ENCODE measurements at regions of chr6 and their contacts with region 1.

Region 1: DNA sequence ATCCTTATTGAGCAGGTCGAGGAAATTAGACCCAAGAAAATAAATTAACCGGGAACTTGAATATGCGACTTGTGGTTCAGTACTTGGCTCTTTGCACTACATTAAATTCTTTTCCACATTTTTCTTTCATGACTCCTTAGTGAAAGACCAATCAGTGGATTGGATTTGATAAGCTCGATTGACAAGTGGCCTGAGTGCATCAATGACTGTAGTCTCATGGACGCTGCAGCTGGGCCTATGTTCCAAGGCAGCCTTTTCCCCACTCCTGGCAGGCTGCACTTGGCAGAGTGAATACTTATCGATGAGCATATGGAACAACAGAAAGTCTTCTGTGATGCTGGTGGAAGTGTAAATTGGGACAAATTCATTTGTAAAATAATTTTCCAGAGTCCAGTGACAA is 210.8 kb upstream of the EXOC2 start:
- DNase-seq: no peak
- H3K4me3 Mint-ChIP-seq: no peak overlapping the region
- H3K27ac Mint-ChIP-seq: no peak overlapping the region
- H3K4me1 Mint-ChIP-seq: no peaks in the 10 kb centered on the region
- H3K27me3 Mint-ChIP-seq: no peaks in the 10 kb centered on the region

Region 2: GRCh38 chr6:364609-365540 is 538.9 kb before region 1 on chr6:
- CTCF ChIA-PET with region 1: no interaction called
- intact Hi-C with region 1: no loop called
- DNase-seq: no peak
- H3K4me3 Mint-ChIP-seq: no peak overlapping the region
- H3K27ac Mint-ChIP-seq: no peak overlapping the region
- H3K4me1 Mint-ChIP-seq: no peaks in the 10 kb centered on the region
- H3K27me3 Mint-ChIP-seq: peaks cover 2% of the 10 kb centered on the region

Region 3: DNA sequence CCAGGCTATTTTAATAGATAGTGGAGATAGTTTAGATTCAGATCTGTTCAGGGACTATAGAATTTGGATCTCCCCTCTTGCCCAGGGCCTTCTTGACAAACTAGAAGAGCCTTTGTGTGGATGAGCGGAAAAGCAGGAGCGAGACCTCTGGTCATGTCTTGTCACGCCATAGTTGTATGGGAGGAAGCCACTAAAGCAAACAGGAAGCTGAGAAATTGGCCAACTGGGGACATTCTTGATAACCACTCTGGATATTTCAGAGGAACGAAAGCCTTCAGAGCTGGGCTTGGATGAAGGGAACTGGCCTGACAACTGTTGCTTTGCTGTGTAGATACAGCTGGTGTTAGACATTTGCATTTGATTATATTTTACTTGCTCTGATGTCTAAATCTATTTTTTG is 156.7 kb before region 1 on chr6:
- CTCF ChIA-PET with region 1: no interaction called
- intact Hi-C with region 1: loop called (anchors 10 kb)
- DNase-seq: no peak
- H3K4me3 Mint-ChIP-seq: no peak overlapping the region
- H3K27ac Mint-ChIP-seq: no peak overlapping the region
- H3K4me1 Mint-ChIP-seq: no peaks in the 10 kb centered on the region
- H3K27me3 Mint-ChIP-seq: no peaks in the 10 kb centered on the region

Region 4: GRCh38 chr6:887583-888235 is 16.1 kb before region 1 on chr6:
- CTCF ChIA-PET with region 1: no interaction called
- intact Hi-C with region 1: no loop called
- DNase-seq: no peak
- H3K4me3 Mint-ChIP-seq: no peak overlapping the region
- H3K27ac Mint-ChIP-seq: no peak overlapping the region
- H3K4me1 Mint-ChIP-seq: peaks cover 9% of the 10 kb centered on the region
- H3K27me3 Mint-ChIP-seq: peaks cover 2% of the 10 kb centered on the region

Region 5: GRCh38 chr6:1113921-1114420 is 210.2 kb after region 1 on chr6:
- CTCF ChIA-PET with region 1: no interaction called
- intact Hi-C with region 1: no loop called
- DNase-seq: no peak
- H3K4me3 Mint-ChIP-seq: no peak overlapping the region
- H3K27ac Mint-ChIP-seq: no peak overlapping the region
- H3K4me1 Mint-ChIP-seq: no peaks in the 10 kb centered on the region
- H3K27me3 Mint-ChIP-seq: peaks cover 9% of the 10 kb centered on the region

Region 6: GRCh38 chr6:1170794-1171193 is 267.0 kb after region 1 on chr6:
- CTCF ChIA-PET with region 1: no interaction called
- intact Hi-C with region 1: no loop called
- DNase-seq: no peak
- H3K4me3 Mint-ChIP-seq: no peak overlapping the region
- H3K27ac Mint-ChIP-seq: no peak overlapping the region
- H3K4me1 Mint-ChIP-seq: no peaks in the 10 kb centered on the region
- H3K27me3 Mint-ChIP-seq: peaks cover 6% of the 10 kb centered on the region

Measured in activated naive CD4-positive, alpha-beta T cell treated with anti-CD3 and anti-CD28 coated beads for 36 hours (primary cell).